H1 (cell line): ENCODE measurements at regions of chr10 and their contacts with region 1.

Region 1: GRCh38 chr10:109978481-109978880 is 29.3 kb upstream of the ADD3 start:
- DNase-seq: peak in 1 of 2 experiments; percentile 88
- H3K4me3 ChIP-seq: no peak overlapping the region
- H3K27ac ChIP-seq: no peak overlapping the region
- H3K4me1 ChIP-seq: no peaks in the 10 kb centered on the region
- H3K27me3 ChIP-seq: no peaks in the 10 kb centered on the region
- CTCF ChIP-seq: peak in 2 of 3 experiments; percentile 73 to 85; a peak in 3 of 4 replicates
- EP300 ChIP-seq: no peak
- POLR2A ChIP-seq: no peak
- RAD21 ChIP-seq: peak; percentile 68 to 79

Region 2: DNA sequence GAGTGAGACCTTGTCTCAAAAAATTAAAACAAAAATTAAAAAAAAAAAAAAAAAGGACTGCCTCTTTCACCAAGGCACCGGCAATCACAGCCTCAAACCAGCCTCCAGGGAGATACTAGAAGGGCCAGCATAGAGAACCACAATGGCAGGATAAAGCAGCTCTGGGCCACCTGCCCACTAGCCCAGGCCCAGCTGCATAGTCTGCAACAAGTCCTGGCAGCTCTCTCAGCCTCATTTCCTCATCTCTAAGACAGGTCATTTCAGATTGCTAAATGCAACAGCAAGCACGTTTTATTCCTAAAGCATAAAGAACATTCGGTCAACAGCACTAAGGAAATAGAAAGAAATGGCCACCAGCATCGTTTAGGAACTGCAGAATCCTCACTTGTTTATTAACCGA is 84.0 kb before region 1 on chr10:
- CTCF ChIA-PET with region 1: interaction called, 11 read pairs
- POLR2A ChIA-PET with region 1: no interaction called
- DNase-seq: no peak
- H3K4me3 ChIP-seq: no peak overlapping the region
- H3K27ac ChIP-seq: no peak overlapping the region
- H3K4me1 ChIP-seq: peaks cover 0 to 8% (median 2%) of the 10 kb centered on the region in 4 experiments; a peak in 6 of 7 replicates
- H3K27me3 ChIP-seq: no peaks in the 10 kb centered on the region
- CTCF ChIP-seq: no peak
- EP300 ChIP-seq: no peak
- POLR2A ChIP-seq: no peak
- RAD21 ChIP-seq: no peak

Region 3: DNA sequence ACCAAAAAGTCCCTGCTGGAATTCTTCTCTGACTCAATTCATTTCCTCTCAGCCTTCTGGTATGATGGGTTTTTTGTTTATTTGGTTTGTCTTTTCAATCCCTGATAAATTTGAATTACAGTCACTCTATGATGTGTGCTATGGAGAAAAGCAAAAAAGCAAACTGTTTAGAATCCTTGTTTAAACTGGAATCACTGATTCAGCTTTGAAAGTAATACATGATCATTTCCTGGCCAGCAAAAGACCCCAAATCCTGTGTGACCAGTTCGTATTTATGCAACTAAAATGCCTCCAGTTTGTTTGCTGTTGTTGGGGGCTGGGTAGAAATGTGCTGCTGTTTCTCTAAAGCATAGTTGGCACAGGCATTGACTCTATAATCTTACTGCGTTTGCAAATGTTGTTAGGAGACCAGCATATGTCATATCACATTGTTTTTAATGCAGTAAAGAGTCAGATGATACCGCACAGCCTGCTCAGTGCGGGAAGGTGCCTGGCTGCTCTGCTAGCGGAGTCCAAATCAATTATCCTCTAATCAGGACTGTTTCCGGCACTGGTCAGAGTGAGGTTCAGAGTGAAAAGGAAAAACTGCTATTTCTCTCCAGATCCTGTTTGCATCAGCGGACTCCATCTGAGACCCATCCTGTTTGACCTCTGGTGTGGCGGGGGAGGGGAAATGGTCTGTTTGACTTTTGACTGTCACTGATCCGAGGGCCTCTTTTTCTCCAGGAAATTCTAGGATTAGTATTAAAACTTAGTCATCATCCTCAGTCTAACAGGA is 11.3 kb before region 1 on chr10:
- CTCF ChIA-PET with region 1: interaction called, 27 read pairs
- POLR2A ChIA-PET with region 1: interaction called, 3 read pairs
- DNase-seq: no peak
- H3K4me3 ChIP-seq: no peak overlapping the region
- H3K27ac ChIP-seq: no peak overlapping the region
- H3K4me1 ChIP-seq: peaks cover 2 to 15% (median 6%) of the 10 kb centered on the region in 4 experiments; a peak in 5 of 7 replicates
- H3K27me3 ChIP-seq: no peaks in the 10 kb centered on the region
- CTCF ChIP-seq: no peak
- EP300 ChIP-seq: no peak
- POLR2A ChIP-seq: no peak
- RAD21 ChIP-seq: no peak

Region 4: GRCh38 chr10:110007701-110008517 is 29.4 kb after region 1 on chr10 and contains the start of gene ADD3:
- CTCF ChIA-PET with region 1: interaction called, 48 read pairs
- POLR2A ChIA-PET with region 1: interaction called, 4 read pairs
- DNase-seq: peak; percentile 90 to 98
- H3K4me3 ChIP-seq: peak within 1 kb of the TSS; percentile 68 to 90 (median 80)
- H3K27ac ChIP-seq: peak within 1 kb of the TSS; percentile 81
- H3K4me1 ChIP-seq: peaks cover 9 to 26% (median 14%) of the 10 kb centered on the region in 4 experiments; a peak in 6 of 7 replicates
- H3K27me3 ChIP-seq: no peaks in the 10 kb centered on the region
- CTCF ChIP-seq: no peak
- EP300 ChIP-seq: no peak
- POLR2A ChIP-seq: peak; percentile 59 to 73
- RAD21 ChIP-seq: no peak
- total RNA-seq, gene ADD3: 78.9 and 85.6 TPM in 2 replicates

Region 5: DNA sequence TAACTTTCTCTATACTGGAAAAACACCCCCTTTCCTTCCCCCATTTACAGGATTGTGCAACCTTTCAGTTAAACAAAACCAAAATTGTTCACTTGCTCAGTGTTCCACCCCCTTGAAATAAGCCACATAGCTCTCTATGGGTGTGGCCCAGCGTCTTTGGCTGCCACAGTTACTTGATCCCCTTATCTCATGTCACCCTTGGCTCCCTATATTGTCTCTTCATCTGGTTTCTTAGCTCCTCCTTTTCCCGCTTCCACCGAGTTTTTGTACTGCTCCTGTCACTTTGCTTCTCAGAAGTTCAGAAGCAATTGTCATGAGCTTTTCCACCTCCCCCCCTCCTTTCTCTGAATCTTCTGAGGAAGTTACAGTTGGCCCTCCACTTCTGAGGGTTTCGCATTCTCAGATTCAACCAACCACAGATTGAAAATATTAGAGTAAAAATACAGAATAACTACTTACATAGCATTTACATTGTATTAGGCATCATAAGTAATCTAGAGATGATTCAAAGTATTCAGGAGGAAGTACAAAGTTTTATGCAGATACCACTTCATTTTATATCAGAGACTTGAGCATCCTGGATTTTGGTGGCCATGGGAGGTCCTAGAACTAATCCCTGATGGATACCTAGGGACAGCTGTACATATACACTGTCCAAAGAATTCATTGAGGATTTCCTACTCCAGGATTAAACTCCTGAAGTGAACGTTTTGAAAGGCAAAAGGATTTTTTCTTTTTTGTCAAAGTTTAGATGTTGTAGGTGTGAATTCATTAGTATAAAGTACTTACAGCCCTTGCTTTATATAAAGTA is 89.7 kb after region 1 on chr10:
- CTCF ChIA-PET with region 1: interaction called, 11 read pairs
- POLR2A ChIA-PET with region 1: no interaction called
- DNase-seq: no peak
- H3K4me3 ChIP-seq: no peak overlapping the region
- H3K27ac ChIP-seq: no peak overlapping the region
- H3K4me1 ChIP-seq: peaks cover 0 to 10% (median 2%) of the 10 kb centered on the region in 4 experiments; a peak in 2 of 7 replicates
- H3K27me3 ChIP-seq: no peaks in the 10 kb centered on the region
- CTCF ChIP-seq: no peak
- EP300 ChIP-seq: no peak
- POLR2A ChIP-seq: no peak
- RAD21 ChIP-seq: no peak

Region 6: DNA sequence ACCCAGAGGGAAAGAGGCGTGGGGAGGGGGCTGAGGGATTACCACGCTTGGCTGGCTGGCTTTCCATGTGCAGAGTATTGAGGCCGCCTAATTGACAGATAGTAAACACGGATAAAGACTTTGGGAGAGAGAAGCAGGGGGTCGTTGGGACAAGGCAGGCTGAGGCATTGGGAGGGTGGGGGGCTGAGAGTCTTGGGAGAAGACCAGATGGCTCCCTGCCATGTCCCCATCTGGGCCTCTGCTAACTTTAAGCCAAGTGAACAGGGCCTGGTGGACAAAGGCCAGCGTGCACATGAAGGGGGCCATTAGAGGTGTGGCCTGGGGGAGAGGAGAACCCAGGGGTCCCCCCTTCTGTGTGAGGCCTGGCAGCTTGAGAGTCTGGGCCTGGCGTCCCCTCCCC is 173.5 kb after region 1 on chr10:
- CTCF ChIA-PET with region 1: no interaction called
- POLR2A ChIA-PET with region 1: no interaction called
- DNase-seq: no peak
- H3K4me3 ChIP-seq: no peak overlapping the region
- H3K27ac ChIP-seq: no peak overlapping the region
- H3K4me1 ChIP-seq: no peaks in the 10 kb centered on the region; a peak in 3 of 7 replicates
- H3K27me3 ChIP-seq: peaks cover 0 to 2% (median 1%) of the 10 kb centered on the region in 4 experiments; a peak in 3 of 7 replicates
- CTCF ChIP-seq: no peak
- EP300 ChIP-seq: no peak
- POLR2A ChIP-seq: no peak
- RAD21 ChIP-seq: no peak